Lower lobe of right lung (tissue), 2 donors: ENCODE measurements at regions of chr11 and their contacts with region 1.

Region 1: DNA sequence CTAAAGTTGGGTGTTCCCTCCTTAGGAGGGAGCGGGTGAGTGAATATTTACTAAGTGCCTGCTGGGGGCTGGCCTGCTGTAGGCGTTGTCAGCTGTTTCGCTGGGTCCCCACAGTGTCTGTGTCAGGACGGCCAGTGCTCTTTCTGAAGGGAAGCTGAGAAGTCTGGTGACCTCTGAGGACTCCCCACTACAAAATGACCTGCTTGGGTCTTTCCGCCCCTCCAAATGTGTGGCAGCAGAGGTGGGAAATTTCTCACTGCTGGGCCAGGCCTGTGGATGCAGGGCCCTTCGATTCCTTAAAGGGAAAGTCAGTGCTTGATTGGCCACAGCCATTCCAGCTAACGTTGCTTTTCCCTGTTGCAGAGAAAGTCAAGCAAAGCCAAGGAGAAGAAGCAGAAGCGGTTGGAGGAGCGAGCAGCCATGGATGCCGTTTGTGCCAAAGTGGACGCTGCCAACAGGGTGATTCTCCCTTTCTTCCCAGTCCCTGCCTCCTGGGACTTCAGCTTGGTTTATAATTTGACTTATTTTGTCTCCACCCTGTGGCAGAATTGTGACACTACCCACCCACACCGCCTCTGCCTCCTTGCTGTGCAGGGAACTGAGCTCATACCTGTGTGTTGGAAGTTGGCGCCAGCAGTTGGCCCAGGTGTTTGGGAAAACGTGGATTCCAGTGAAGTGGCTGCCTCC is 6.8 kb downstream of the NAA40 start:
- DNase-seq: peak; percentile 65
- ATAC-seq: peak; percentile 88 to 94
- H3K4me3 ChIP-seq: no peak overlapping the region
- H3K27ac ChIP-seq: peak overlapping the region; percentile 4
- H3K4me1 ChIP-seq: peaks cover 20% of the 10 kb centered on the region
- H3K27me3 ChIP-seq: no peaks in the 10 kb centered on the region
- CTCF ChIP-seq: peak; percentile 78

Region 2: DNA sequence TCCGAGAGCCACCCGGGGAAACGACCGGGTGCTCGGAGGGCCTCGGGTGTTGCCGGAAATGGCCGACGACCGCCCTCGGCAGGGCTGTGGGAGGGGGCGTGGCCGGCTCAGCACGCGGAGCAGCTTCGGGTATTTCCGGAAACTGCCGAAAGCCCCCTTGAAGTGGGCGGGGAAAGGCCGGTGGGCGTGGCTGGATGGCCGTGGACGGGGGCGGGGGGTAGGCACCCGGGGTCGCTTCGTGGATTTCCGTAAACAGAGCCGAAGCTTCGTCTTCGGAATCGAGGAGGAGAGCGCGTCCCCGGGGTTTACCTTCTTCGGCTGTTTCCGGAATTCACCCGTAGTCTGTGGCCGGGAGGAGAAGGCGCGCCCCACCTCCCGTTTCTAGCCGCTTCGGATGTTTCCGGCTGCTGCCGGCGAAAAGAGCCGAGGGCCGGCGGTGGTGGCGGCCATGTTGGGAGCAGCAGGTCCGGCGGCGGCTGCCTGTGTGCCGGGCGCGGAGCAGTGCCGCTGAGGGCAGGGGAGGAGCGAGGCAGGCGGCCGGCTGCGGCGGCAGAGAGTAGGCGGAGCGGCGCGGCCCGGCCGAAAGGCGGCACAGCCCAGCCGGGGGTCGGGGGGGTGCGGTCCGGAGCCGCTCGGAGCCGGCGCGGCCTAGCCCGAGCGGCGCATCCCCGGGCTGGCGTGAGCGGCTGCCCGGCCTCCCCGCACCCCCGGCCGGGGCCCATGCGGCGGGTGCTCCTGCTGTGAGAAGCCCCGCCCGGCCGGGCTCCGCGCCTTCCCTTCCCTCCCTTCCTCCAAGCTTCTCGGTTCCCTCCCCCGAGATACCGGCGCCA is 106.7 kb before region 1 on chr11 and contains the start of gene MARK2:
- intact Hi-C with region 1: loop called (anchors 10 kb)
- DNase-seq: peak; percentile 97
- ATAC-seq: peak; percentile 93 to 96
- H3K4me3 ChIP-seq: peak within 1 kb of the TSS; percentile 89
- H3K27ac ChIP-seq: peak within 1 kb of the TSS; percentile 84
- H3K4me1 ChIP-seq: peaks cover 55% of the 10 kb centered on the region
- H3K27me3 ChIP-seq: no peaks in the 10 kb centered on the region
- CTCF ChIP-seq: no peak
- total RNA-seq, gene MARK2: 44.9 TPM